T-cell (primary cell): ENCODE measurements at regions of chr10 and their contacts with region 1.

Region 1: GRCh38 chr10:92284112-92284704 is 6.7 kb downstream of the CPEB3 start:
- DNase-seq: no peak
- ATAC-seq: no peak
- H3K4me3 ChIP-seq: no peak overlapping the region
- H3K4me3 Mint-ChIP-seq: no peak overlapping the region
- H3K27ac ChIP-seq: peak overlapping the region; percentile 41
- H3K27ac Mint-ChIP-seq: no peak overlapping the region
- H3K4me1 ChIP-seq: no peaks in the 10 kb centered on the region
- H3K4me1 Mint-ChIP-seq: peaks cover 0 to 5% (median 5%) of the 10 kb centered on the region in 3 donors
- H3K27me3 ChIP-seq: no peaks in the 10 kb centered on the region
- H3K27me3 Mint-ChIP-seq: no peaks in the 10 kb centered on the region

Region 2: GRCh38 chr10:91163269-91163868 is 1120.8 kb before region 1 on chr10:
- CTCF ChIA-PET with region 1: no interaction called
- POLR2A ChIA-PET with region 1: no interaction called
- DNase-seq: peak; percentile 59 to 94 (median 90)
- ATAC-seq: peak; percentile 62 to 76 (median 66)
- H3K4me3 ChIP-seq: peak overlapping the region; percentile 66 to 74
- H3K4me3 Mint-ChIP-seq: peak overlapping the region; percentile 87 to 91 (median 90)
- H3K27ac ChIP-seq: peak overlapping the region; percentile 90
- H3K27ac Mint-ChIP-seq: peak overlapping the region; percentile 93 to 94
- H3K4me1 ChIP-seq: peaks cover 3 to 16% of the 10 kb centered on the region in 2 experiments
- H3K4me1 Mint-ChIP-seq: peaks cover 55 to 60% (median 58%) of the 10 kb centered on the region in 3 donors
- H3K27me3 ChIP-seq: no peaks in the 10 kb centered on the region
- H3K27me3 Mint-ChIP-seq: no peaks in the 10 kb centered on the region

Region 3: GRCh38 chr10:91891285-91892001 is 392.8 kb before region 1 on chr10:
- CTCF ChIA-PET with region 1: no interaction called
- POLR2A ChIA-PET with region 1: no interaction called
- DNase-seq: no peak
- ATAC-seq: no peak
- H3K4me3 ChIP-seq: no peak overlapping the region
- H3K4me3 Mint-ChIP-seq: no peak overlapping the region
- H3K27ac ChIP-seq: no peak overlapping the region
- H3K27ac Mint-ChIP-seq: no peak overlapping the region
- H3K4me1 ChIP-seq: peaks cover 6 to 8% of the 10 kb centered on the region in 2 experiments
- H3K4me1 Mint-ChIP-seq: peaks cover 9 to 14% (median 10%) of the 10 kb centered on the region in 3 donors
- H3K27me3 ChIP-seq: peaks cover 0 to 6% of the 10 kb centered on the region in 2 experiments
- H3K27me3 Mint-ChIP-seq: peaks cover 6 to 9% of the 10 kb centered on the region in 2 donors

Region 4: DNA sequence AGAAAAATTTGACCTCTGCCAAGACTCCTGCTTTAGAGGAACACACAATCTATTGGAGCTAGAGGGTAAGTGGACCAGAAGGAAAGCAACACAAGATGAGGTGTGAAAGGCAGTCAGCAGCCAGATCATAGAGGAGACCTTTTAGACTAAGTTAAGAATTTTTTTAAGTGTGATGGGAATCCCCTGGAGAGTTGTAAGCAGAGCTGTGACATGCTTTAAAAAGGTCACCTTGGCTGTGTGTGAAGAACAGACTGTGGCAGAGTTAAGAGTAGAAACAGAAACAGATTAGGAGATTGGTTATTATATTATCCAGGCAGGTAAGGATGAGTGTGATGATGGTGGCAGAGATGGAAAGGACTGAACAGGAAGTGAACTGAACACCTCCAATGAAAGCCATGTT is 16.9 kb before region 1 on chr10:
- CTCF ChIA-PET with region 1: no interaction called
- POLR2A ChIA-PET with region 1: no interaction called
- DNase-seq: no peak
- ATAC-seq: no peak
- H3K4me3 ChIP-seq: no peak overlapping the region
- H3K4me3 Mint-ChIP-seq: no peak overlapping the region
- H3K27ac ChIP-seq: no peak overlapping the region
- H3K27ac Mint-ChIP-seq: no peak overlapping the region
- H3K4me1 ChIP-seq: no peaks in the 10 kb centered on the region
- H3K4me1 Mint-ChIP-seq: peaks cover 0 to 6% (median 2%) of the 10 kb centered on the region in 3 donors
- H3K27me3 ChIP-seq: no peaks in the 10 kb centered on the region
- H3K27me3 Mint-ChIP-seq: no peaks in the 10 kb centered on the region

Region 5: DNA sequence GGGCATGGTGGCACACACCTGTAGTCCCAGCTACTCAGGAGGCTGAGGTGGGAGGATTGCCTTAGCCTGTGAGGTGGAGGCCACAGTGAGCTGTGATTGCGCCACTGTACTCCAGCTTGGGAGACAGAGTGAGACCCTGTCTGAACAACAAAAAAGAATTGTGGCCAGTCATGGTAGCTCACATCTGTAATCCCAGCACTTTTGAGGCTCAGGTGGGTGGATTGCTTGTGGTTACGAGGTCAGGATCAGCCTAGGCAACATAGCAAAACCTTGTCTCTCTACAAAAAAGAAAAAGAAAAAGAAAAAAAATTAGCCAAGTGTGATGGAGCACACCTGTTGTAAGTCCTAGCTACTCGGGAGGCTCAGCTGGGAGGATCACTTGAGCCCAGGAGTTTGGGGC is 29.5 kb after region 1 on chr10:
- CTCF ChIA-PET with region 1: no interaction called
- POLR2A ChIA-PET with region 1: interaction called in 1 of 2 experiments, 11 read pairs
- DNase-seq: no peak
- ATAC-seq: no peak
- H3K4me3 ChIP-seq: no peak overlapping the region
- H3K4me3 Mint-ChIP-seq: no peak overlapping the region
- H3K27ac ChIP-seq: no peak overlapping the region
- H3K27ac Mint-ChIP-seq: no peak overlapping the region
- H3K4me1 ChIP-seq: peaks cover 0 to 3% of the 10 kb centered on the region in 2 experiments
- H3K4me1 Mint-ChIP-seq: peaks cover 17 to 22% (median 17%) of the 10 kb centered on the region in 3 donors
- H3K27me3 ChIP-seq: no peaks in the 10 kb centered on the region
- H3K27me3 Mint-ChIP-seq: no peaks in the 10 kb centered on the region

Region 6: DNA sequence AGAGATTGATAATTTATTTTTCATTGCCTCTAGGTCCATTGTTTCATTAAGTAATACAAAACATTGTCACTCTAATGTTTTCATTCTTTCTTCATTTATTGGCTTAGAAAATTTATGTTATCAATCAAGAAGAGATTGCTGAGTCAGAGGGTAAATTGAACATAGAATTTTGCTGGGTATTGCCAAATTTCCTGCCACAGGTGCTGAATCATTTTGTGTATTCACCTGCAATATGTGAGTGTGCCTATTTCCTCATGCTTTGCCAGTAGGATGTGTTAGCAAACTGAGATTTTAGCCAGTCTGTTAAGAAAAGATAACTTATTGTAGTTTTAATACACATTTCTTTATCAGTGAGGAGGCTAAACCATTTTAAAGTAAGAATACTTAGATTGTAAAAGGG is 44.8 kb after region 1 on chr10:
- CTCF ChIA-PET with region 1: no interaction called
- POLR2A ChIA-PET with region 1: no interaction called
- DNase-seq: no peak
- ATAC-seq: no peak
- H3K4me3 ChIP-seq: no peak overlapping the region
- H3K4me3 Mint-ChIP-seq: no peak overlapping the region
- H3K27ac ChIP-seq: no peak overlapping the region
- H3K27ac Mint-ChIP-seq: no peak overlapping the region
- H3K4me1 ChIP-seq: peaks cover 0 to 2% of the 10 kb centered on the region in 2 experiments
- H3K4me1 Mint-ChIP-seq: peaks cover 38 to 52% (median 48%) of the 10 kb centered on the region in 3 donors
- H3K27me3 ChIP-seq: no peaks in the 10 kb centered on the region
- H3K27me3 Mint-ChIP-seq: no peaks in the 10 kb centered on the region